Mammary epithelial cell (primary cell): ENCODE measurements at regions of chr1 and their contacts with region 1.

Region 1: DNA sequence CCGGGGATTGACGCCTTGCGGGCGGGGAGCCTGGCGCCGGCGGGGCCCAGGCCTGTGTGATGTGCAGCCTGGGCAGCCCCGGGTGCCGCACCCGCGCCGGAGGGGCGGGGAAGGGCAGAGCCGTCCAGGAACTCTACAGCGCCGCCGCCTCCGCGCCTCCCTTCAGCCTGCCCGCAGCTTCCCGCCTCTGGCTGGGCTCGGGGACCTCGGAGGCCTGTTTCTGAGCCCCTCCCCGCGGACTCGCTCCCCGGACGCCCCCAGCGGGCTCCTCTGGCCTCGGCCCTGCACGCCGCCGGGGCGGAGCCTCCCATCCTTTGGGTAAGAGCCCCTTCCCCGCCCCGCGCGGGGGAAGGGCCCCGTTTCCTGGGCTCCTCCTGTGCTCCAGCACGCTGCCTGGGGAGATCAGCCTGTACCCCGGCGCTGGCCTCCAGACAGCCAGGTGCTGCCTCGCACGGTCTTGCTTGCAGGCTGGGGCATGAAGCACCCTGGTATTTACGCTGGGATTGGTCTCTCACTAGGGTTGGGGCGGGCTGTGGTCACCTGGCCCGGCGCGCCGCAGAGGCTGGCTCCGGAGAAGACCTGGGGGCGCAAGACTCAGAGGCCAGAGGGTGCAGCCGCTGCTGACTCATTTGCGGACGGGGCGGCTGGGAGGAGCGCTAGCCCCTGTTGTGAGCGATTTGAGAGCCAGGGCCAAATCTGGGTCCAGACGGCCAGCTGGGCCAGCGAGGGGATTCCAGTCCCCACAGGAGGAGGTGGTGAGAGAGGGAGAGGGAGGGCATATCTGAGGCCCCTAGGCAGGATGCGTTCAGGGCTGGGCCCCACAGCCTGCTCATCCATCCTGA is 5.7 kb upstream of the ACOT11 start:
- DNase-seq: peak; percentile 99
- H3K4me3 ChIP-seq: peak overlapping the region; percentile 45 to 59 (median 47)
- H3K27ac ChIP-seq: peak overlapping the region; percentile 96
- H3K4me1 ChIP-seq: peaks cover 34% of the 10 kb centered on the region
- H3K27me3 ChIP-seq: no peaks in the 10 kb centered on the region
- CTCF ChIP-seq: peak in 1 of 2 donors; percentile 25

Region 2: DNA sequence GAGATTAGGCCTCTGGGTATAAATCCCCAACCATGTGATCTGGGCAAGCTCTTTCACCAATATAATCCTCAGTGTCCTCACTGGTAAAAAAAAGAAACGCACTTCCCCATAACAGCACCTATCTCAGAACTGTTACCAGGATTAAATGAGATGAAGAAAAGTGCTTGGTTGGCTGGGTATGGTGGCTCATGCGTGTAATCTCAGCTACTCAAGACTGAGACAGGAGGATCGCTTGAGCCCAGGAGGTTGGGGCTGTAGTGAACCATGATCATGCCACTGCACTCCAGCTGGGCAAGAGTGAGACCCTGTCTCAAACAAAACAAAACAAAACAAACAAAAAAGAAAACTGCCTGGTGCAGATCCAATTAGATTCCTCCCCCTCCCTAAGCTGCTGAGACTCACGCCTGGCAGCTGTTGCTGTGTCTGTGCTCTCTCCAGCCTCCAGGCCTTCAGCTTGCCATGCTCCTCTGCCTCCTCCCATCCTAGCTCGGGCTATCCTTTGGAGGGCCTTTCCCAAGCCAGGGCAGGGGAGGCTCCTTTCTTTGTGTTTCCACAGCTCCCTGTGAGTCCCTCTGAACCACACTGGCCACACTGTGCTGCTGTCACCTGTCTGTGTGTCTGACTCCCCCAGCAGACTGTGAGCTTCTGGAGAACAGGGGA is 361.5 kb before region 1 on chr1:
- CTCF ChIA-PET with region 1: no interaction called
- dilution Hi-C with region 1: no loop called
- in situ Hi-C with region 1: no loop called
- intact Hi-C with region 1: no loop called
- DNase-seq: no peak
- H3K4me3 ChIP-seq: no peak overlapping the region
- H3K27ac ChIP-seq: no peak overlapping the region
- H3K4me1 ChIP-seq: no peaks in the 10 kb centered on the region
- H3K27me3 ChIP-seq: no peaks in the 10 kb centered on the region
- CTCF ChIP-seq: no peak

Region 3: DNA sequence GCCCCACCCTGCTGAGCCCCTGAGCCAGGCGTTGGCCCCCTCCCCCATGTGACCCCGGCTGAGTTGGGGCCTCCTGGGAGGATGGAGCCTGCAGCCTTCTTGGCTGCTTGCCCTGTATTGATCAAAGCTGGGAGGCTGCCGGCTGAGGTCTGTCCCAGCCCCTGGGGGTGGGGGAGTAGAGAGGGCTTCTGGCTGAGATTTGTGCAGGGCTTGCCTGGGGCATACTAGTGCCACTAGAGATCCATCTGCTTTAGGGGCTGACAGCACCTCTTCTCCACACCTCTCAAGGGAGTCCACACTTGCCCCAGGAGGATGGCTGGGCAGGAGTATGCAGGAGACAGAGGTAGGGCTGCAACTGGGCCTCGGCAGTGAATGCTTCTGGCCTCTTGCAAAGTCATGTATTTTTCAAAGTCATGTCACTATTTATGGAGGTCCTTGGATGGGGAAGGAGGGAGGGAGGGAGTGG is 82.6 kb before region 1 on chr1:
- CTCF ChIA-PET with region 1: no interaction called
- dilution Hi-C with region 1: no loop called
- in situ Hi-C with region 1: no loop called
- intact Hi-C with region 1: no loop called
- DNase-seq: no peak
- H3K4me3 ChIP-seq: no peak overlapping the region
- H3K27ac ChIP-seq: no peak overlapping the region
- H3K4me1 ChIP-seq: no peaks in the 10 kb centered on the region
- H3K27me3 ChIP-seq: no peaks in the 10 kb centered on the region
- CTCF ChIP-seq: no peak

Region 4: GRCh38 chr1:54499360-54500106 is 42.8 kb before region 1 on chr1:
- CTCF ChIA-PET with region 1: no interaction called
- dilution Hi-C with region 1: no loop called
- in situ Hi-C with region 1: loop called in 1 of 2 experiments (anchors 5 kb)
- intact Hi-C with region 1: loop called (anchors 1 kb)
- DNase-seq: peak; percentile 12
- H3K4me3 ChIP-seq: peak overlapping the region; percentile 29 to 45 (median 44)
- H3K27ac ChIP-seq: no peak overlapping the region
- H3K4me1 ChIP-seq: peaks cover 20% of the 10 kb centered on the region
- H3K27me3 ChIP-seq: no peaks in the 10 kb centered on the region
- CTCF ChIP-seq: peak in 1 of 2 donors; percentile 59

Region 5: GRCh38 chr1:54581621-54582035 is 39.3 kb after region 1 on chr1:
- CTCF ChIA-PET with region 1: no interaction called
- dilution Hi-C with region 1: no loop called
- in situ Hi-C with region 1: no loop called
- intact Hi-C with region 1: loop called (anchors 1 kb)
- DNase-seq: peak; percentile 93
- H3K4me3 ChIP-seq: no peak overlapping the region
- H3K27ac ChIP-seq: no peak overlapping the region
- H3K4me1 ChIP-seq: peaks cover 16% of the 10 kb centered on the region
- H3K27me3 ChIP-seq: no peaks in the 10 kb centered on the region
- CTCF ChIP-seq: no peak

Region 6: DNA sequence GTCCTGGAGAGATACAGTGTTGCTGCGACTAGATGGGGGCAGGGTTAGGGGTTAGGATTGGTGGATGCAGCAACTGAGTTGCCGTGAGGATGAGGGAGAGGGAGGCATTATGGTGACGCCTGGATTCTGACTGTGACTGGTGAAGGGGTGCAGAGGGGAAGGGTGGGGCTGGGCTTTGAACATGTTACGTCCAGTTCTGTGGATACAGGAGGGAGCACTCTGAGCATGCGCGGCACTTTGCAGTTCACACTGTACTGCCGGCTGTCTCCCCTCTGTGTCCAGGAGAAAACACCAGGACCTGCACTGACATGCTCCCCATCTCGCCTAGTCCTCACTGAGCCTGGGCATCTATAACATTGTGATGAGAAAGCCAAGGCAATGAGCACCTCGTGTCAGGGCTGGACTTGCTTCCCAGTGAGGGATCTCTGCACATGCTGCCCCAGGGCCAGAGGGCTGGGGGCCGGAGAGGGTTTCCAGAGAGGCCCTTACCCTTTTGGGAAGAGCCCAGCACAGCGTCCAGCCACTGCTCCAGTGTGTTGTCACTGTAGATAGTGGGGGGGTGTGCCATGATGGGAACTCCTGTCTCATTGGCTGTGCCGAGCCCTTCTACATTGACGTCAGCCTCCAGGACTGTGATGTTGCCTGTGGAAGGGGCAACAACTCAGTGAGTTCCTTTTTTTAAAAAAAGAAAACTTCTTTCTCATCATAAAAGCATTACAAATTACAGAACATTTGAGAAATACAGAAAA is 73.4 kb after region 1 on chr1:
- CTCF ChIA-PET with region 1: no interaction called
- dilution Hi-C with region 1: no loop called
- in situ Hi-C with region 1: no loop called
- intact Hi-C with region 1: loop called (anchors 2 kb)
- DNase-seq: peak; percentile 90
- H3K4me3 ChIP-seq: no peak overlapping the region
- H3K27ac ChIP-seq: no peak overlapping the region
- H3K4me1 ChIP-seq: peaks cover 12% of the 10 kb centered on the region
- H3K27me3 ChIP-seq: no peaks in the 10 kb centered on the region
- CTCF ChIP-seq: no peak

Region 7: DNA sequence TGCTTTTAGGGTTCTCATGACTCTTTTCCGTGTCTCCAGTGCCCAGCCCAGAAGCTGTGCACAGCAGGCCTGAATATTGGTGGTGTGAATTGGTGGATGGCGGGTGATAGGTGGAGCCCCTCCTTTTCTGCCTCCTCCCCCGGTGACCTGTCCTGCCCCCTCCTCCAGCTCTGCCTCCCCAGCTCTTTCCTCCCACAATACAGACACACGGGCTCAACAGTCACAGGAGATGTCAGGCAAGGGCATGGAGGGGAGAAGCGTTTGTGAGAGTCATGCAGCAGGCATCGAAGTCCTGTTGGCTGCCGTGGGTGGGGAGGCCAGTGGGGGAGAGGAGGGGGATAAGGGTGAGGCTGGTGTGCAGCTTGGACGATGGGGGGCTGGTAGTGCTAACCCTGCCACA is 156.0 kb after region 1 on chr1:
- CTCF ChIA-PET with region 1: no interaction called
- dilution Hi-C with region 1: no loop called
- in situ Hi-C with region 1: no loop called
- intact Hi-C with region 1: no loop called
- DNase-seq: no peak
- H3K4me3 ChIP-seq: no peak overlapping the region
- H3K27ac ChIP-seq: no peak overlapping the region
- H3K4me1 ChIP-seq: no peaks in the 10 kb centered on the region
- H3K27me3 ChIP-seq: peaks cover 3% of the 10 kb centered on the region
- CTCF ChIP-seq: no peak